ENCODE measurements at regions of chr5 and their contacts with region 1.

Region 1: DNA sequence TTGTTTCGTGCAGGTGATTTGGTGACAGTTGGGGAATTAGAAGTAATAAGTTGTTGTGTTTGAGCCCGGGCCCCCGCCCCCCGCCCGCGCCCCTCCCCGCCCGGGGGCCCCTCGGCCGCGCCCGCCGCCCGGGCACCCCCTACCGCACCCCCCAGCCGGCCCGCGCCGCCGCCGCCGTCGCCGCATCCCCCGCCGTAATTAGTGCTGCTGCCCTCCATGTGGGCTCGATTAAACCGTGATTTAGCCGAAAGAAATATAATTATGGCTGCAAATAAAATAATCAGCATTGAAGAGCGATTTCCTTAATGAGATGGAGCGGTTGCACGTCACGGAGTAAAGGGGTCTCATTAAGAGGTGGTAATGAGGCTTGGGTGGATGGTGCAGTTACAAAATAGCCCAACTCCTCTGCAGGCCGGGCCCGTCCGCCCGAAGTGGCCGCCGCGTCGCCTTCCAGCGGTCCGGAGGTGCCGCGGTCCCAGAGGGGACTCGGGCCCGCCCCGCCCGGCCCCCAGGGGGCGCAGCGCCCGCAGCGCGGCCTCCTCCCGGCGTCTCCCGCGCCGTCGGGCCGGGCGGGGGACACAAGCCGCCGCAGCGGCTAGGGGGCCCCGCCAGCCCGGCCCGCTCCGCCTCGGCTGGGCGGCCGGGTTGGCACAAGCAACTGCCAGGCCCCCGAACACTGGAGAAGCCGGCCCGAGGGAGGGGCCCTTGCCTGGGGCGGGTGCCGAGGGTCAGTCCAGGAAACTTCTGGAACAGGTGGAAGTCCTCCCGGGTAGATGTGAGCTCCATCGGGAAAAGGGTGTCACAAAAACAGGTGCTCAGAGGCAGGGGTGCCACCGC is 6.9 kb upstream of the OTP start:
- DNase-seq: no peak
- H3K4me3 ChIP-seq: peak overlapping the region; percentile 23 to 57 (median 38)
- H3K27ac ChIP-seq: no peak overlapping the region
- H3K4me1 ChIP-seq: peaks cover 21 to 41% (median 33%) of the 10 kb centered on the region in 4 donors
- H3K27me3 ChIP-seq: peaks cover 0 to 77% (median 52%) of the 10 kb centered on the region in 4 donors
- CTCF ChIP-seq: peak; percentile 44 to 63 (median 51)
- EP300 ChIP-seq: no peak
- POLR2A ChIP-seq: no peak

Region 2: DNA sequence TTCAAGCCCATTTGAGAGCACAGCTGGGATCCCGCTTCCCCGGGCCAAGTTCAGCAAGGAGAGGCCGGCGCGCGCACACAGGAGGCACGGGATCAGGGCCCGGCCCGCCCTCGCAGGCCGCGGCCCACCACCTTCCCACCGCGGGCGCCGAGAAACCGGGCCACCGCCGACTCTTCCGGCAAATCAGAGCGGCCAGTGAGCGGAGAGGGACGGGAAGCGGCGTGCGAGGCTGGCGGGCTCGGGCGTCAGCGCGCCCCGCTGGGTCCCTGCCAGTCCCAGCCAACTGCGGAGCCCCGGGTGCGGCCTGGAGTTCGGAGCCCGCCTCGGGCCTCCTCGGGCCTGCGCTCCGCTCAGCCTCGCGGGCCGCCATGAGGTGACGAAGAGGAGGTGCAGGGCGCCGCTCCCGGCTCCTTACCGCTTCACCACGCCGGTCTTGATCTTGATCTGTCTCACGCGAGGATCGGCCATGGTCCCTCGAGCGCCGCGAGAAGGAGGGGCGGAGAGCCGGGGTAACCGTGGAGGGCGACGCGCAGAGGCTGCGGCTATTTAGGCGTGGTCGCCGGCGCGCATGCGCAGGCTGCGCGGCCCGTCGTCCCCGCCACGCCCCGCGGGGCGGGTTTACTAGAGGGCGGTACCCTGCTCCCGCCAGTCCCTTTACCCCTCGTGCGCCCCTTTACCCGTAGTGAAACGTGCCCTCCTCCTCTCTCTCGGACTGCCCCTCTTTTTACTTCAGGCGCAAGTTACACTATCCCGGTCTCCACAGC is 130.6 kb after region 1 on chr5 and contains the start of gene TBCA:
- intact Hi-C with region 1: loop called (anchors 10 kb)
- DNase-seq: peak; percentile 93
- H3K4me3 ChIP-seq: peak within 1 kb of the TSS; percentile 68 to 85 (median 80)
- H3K27ac ChIP-seq: peak within 1 kb of the TSS; percentile 93 to 96 (median 96)
- H3K4me1 ChIP-seq: peaks cover 33 to 49% (median 49%) of the 10 kb centered on the region in 4 donors
- H3K27me3 ChIP-seq: no peaks in the 10 kb centered on the region
- CTCF ChIP-seq: peak in 1 of 3 experiments; percentile 34
- EP300 ChIP-seq: no peak
- POLR2A ChIP-seq: peak; percentile 65
- total RNA-seq, gene TBCA: 128 to 152 (median 146) TPM

Region 3: DNA sequence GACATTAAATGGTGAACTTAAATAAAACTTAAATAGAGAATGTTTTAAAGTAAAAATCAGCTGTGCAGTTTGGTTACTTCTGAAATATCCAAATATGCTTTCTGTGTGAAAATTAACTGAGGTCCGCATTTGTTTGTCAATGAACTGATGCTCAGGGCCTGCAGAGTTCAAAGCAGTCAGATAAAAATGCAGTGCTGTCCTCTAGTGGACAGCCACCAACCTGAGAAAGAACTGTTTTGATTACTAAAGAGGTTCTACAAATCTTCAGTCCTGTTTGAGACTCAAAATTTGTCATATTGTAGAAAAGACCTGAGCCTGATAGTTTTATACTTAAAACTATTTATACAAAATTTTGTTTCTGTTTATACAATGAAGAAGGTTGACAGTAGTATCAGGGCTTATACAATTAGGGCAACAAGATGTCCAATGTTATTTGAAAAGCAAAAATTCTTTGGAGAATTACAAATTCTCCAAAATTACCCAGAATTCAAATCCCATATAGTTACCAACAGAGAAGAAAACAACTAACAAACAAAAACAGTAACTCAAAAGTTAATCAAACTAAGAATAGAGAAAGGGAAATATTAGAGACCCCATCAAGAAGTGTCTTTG is 363.1 kb after region 1 on chr5:
- intact Hi-C with region 1: loop called (anchors 10 kb)
- DNase-seq: no peak
- H3K4me3 ChIP-seq: no peak overlapping the region
- H3K27ac ChIP-seq: no peak overlapping the region
- H3K4me1 ChIP-seq: peaks cover 0 to 15% (median 14%) of the 10 kb centered on the region in 4 donors
- H3K27me3 ChIP-seq: no peaks in the 10 kb centered on the region
- CTCF ChIP-seq: peak; percentile 57 to 73 (median 59)
- EP300 ChIP-seq: no peak
- POLR2A ChIP-seq: no peak